ENCODE measurements at regions of chr3 and their contacts with region 1.

Region 1: GRCh38 chr3:196753201-196753600 is 13.5 kb downstream of the PAK2 start:
- DNase-seq: no peak
- ATAC-seq: no peak
- H3K4me3 ChIP-seq: no peak overlapping the region
- H3K27ac ChIP-seq: no peak overlapping the region
- H3K4me1 ChIP-seq: peaks cover 4 to 6% of the 10 kb centered on the region in 2 experiments; a peak in 3 of 5 replicates
- H3K27me3 ChIP-seq: no peaks in the 10 kb centered on the region
- CTCF ChIP-seq: no peak
- EP300 ChIP-seq: no peak
- POLR2A ChIP-seq: no peak
- RAD21 ChIP-seq: no peak

Region 2: GRCh38 chr3:196739671-196740480 is 13.3 kb before region 1 on chr3 and contains the start of gene PAK2:
- CTCF ChIA-PET with region 1: no interaction called
- POLR2A ChIA-PET with region 1: interaction called, 11 read pairs
- in situ Hi-C with region 1: no loop called
- intact Hi-C with region 1: no loop called
- DNase-seq: peak; percentile 94 to 95 (median 94)
- ATAC-seq: peak; percentile 94
- H3K4me3 ChIP-seq: peak within 1 kb of the TSS; percentile 97
- H3K27ac ChIP-seq: peak within 1 kb of the TSS; percentile 96
- H3K4me1 ChIP-seq: peaks cover 0 to 7% of the 10 kb centered on the region in 2 experiments; a peak in 4 of 5 replicates
- H3K27me3 ChIP-seq: no peaks in the 10 kb centered on the region
- CTCF ChIP-seq: peak in 1 of 3 experiments; percentile 1; a peak in 1 of 6 replicates
- EP300 ChIP-seq: peak; percentile 9; the same call in 1 of the 2 replicates
- POLR2A ChIP-seq: peak; percentile 78
- RAD21 ChIP-seq: no peak
- polyA plus RNA-seq, gene PAK2: 13.2 to 18.6 TPM

Region 3: GRCh38 chr3:196942226-196942914 is 189.2 kb after region 1 on chr3 and contains the start of gene NCBP2:
- CTCF ChIA-PET with region 1: no interaction called
- POLR2A ChIA-PET with region 1: no interaction called
- in situ Hi-C with region 1: no loop called
- intact Hi-C with region 1: no loop called
- DNase-seq: peak; percentile 91 to 99 (median 94)
- ATAC-seq: peak; percentile 94
- H3K4me3 ChIP-seq: peak within 1 kb of the TSS; percentile 99
- H3K27ac ChIP-seq: peak within 1 kb of the TSS; percentile 93
- H3K4me1 ChIP-seq: peaks cover 7 to 12% of the 10 kb centered on the region in 2 experiments; a peak in 4 of 5 replicates
- H3K27me3 ChIP-seq: no peaks in the 10 kb centered on the region
- CTCF ChIP-seq: peak; percentile 88 to 91 (median 88)
- EP300 ChIP-seq: peak; percentile 69
- POLR2A ChIP-seq: peak; percentile 94
- RAD21 ChIP-seq: peak; percentile 52 to 62
- polyA plus RNA-seq, gene NCBP2: 56.4 to 100 TPM